Dorsolateral prefrontal cortex (tissue), 120 donors: ENCODE measurements at regions of chr9 and their contacts with region 1.

Region 1: GRCh38 chr9:121545875-121546423 is 46.3 kb upstream of the GGTA1 start:
- DNase-seq: peak; percentile 88 to 97 (median 92)
- H3K4me3 ChIP-seq: peak overlapping the region in 56 of 59 donors; percentile 7 to 60 (median 45)
- H3K27ac ChIP-seq: peak overlapping the region in 5 of 59 donors; percentile 3 to 60 (median 51)
- H3K27me3 ChIP-seq: no peaks in the 10 kb centered on the region
- CTCF ChIP-seq: peak; percentile 37 to 98 (median 96)

Region 2: DNA sequence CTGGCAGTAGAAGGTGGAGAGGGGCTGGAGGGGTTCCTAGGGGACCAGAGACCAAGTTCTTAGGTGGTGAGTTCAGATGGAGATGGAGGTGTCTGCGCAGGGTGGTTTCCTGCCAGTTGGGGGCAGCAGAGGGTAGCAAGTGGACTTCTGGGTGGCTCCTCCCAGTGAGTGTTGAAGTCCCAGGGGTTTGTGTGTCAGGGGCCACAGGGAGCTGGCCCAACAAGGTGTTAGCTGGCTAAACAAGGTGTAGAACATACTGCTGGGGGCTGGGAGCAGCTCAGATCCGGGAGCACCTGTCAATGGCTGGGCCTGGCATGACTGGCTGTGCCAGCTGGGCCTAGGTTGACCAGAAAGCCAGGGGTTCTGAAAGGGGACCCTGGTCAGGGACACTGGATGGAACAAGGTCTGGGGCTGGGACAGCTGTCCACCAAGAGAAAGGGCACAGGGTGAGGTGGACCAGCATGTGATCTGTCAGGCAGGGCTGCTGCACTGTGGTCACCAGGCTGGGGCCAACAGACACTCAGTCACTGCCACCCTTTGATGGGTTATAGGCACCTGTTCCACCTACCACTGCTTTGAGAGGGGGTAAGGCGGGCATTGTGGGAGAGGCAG is 141.1 kb after region 1 on chr9:
- intact Hi-C with region 1: loop called (anchors 5 kb)
- DNase-seq: peak; percentile 72 to 85 (median 78)
- H3K4me3 ChIP-seq: no peak overlapping the region
- H3K27ac ChIP-seq: peak overlapping the region in 13 of 59 donors; percentile 4 to 71 (median 32)
- H3K27me3 ChIP-seq: no peaks in the 10 kb centered on the region
- CTCF ChIP-seq: peak; percentile 39 to 96 (median 86)

Region 3: DNA sequence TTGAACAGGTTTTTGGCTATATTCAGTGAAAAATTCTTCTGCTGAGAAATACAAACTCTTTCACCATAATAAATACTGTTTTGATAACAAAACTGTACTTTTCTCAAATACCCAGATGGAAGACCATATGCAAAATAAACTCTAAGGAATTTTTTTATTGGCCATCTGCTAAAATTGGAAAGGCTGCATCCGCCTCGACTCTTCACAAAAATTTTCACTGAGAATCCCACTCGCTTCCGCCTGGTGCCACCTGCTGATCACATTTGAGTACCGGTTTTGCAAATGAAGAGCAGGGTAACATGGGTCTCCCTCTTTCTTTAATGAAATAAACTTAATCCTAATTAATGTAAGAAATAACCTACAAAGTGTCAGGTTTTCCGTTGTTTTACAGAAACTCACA is 470.8 kb after region 1 on chr9:
- intact Hi-C with region 1: loop called in 1 of 2 experiments (anchors 5 kb)
- DNase-seq: peak in 6 of 10 donors; percentile 47 to 67 (median 56)
- H3K4me3 ChIP-seq: peak overlapping the region in 3 of 59 donors; percentile 4 to 7 (median 4)
- H3K27ac ChIP-seq: peak overlapping the region in 39 of 59 donors; percentile 6 to 73 (median 44)
- H3K27me3 ChIP-seq: no peaks in the 10 kb centered on the region
- CTCF ChIP-seq: peak in 54 of 56 donors; percentile 34 to 75 (median 56)

Region 4: DNA sequence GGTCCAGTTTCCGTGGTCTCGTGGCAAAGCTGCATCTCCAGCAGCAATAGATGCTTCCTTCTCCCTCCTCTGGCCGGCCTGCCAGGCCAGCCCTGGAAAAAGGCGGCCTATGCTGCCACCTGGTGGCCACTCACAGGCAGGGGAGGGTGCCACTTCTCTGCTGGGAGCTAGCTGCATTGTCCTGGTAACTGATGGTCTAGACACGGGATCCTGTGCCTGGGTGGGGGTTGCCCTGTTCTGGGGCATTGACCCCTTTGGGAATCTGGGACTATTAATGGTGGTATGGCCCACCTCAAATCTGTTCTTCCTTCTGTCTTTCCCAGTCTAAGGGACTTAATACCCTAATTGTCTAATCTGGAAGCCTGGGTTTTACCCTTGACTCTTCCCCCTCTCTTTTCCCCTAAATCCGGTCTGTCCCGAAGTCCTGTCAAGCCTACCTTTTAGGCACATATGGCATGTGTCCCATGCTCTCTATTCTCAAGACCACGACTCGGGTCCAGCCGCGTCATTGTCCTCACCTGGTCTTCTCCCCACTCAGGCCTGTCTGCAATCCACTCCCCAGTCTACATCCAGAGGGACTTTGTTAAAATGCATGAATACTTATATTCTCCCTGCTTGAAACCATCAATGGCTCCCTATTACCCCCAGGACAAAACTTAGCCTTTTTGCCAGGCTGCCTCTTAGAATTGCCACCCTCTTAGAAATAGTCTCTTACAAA is 804.8 kb after region 1 on chr9:
- intact Hi-C with region 1: loop called in 1 of 2 experiments (anchors 10 kb)
- DNase-seq: peak; percentile 78 to 94 (median 86)
- H3K4me3 ChIP-seq: no peak overlapping the region
- H3K27ac ChIP-seq: peak overlapping the region in 5 of 59 donors; percentile 3 to 46 (median 22)
- H3K27me3 ChIP-seq: peaks cover 0 to 2% (median 0%) of the 10 kb centered on the region in 45 donors
- CTCF ChIP-seq: peak; percentile 96 to 100 (median 99)